ENCODE measurements at regions of chr9 and their contacts with region 1.

Region 1: DNA sequence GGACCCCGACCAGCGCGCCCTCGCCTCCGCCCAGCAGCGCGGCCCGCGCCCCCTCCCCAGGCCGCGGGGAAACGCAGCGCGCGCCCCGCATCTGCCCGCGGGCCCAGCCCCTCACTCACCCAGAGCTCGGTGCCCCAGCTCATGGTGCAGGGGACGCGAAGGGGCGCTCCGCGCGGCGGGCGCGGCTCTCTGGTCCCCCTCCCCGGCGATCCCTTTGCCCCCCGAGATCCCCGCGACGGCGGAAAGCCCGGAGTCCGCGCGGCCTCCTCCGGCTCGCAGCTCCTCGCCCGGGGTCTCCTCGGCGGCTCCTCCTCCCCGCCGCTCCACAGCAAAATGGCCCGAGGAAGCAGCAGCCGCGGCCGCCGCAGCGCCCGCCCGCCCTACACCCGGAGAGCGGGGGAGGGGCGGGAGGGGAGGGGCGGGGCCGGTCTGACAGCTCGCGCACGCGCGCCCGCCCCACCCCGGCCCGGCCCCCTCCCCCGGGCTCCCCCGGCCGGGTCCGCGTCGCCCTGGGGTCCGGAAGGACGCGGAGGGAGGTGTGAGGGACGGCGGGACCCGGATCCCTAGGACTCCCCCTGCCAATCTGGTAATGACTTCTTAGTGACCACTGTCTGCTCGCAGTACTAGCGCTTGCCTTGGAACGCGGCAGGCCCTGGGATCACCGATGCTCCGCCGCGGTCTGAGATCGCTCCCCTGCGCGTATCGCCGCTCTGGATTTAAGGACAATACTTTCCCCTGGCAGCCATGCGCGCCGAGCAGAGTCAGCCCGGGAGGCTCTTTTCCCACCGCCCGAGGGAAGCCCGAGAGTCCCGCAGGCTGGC is at the start of gene FNBP1:
- DNase-seq: peak; percentile 41 to 93 (median 83)

Region 2: DNA sequence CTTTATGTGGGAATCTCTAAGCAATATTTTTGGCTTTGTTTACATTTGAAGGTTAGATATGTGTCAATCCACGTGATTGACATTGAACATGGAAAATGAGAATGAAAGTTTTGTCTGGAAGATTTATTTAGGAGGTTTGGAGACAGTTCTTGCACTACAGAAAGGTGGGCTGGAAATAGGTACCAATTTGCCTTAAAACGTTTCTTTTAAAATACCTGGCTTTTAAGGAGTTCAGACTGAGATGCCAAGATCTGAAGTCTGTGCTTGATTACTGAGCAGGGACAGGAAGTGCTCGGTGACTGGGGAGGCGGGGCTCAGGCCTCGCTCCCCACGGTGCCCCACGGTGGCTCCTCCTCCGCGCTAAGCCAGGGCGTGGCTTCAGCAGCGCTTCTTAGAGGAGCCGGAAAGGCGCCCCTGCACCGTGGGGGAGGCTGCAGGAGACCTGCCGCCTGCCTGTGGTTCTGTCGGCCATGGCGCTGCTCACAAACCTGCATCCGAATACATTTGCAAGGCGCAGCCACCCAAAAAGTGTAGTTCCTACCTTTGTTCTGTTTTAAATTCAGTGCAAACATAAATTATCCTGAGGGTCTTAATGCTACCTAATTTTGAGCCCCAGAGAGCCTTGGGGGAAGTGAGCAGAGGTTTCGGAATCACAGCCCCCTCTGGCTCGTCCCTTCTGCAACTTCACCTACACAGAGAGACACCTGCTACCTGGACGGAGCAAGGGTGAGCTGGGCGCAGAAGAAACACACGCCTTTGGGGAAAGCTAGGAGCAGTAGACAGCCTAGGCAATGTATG is 158.6 kb before region 1 on chr9:
- intact Hi-C with region 1: loop called (anchors 5 kb)
- DNase-seq: peak; percentile 74 to 95 (median 88)

Region 3: DNA sequence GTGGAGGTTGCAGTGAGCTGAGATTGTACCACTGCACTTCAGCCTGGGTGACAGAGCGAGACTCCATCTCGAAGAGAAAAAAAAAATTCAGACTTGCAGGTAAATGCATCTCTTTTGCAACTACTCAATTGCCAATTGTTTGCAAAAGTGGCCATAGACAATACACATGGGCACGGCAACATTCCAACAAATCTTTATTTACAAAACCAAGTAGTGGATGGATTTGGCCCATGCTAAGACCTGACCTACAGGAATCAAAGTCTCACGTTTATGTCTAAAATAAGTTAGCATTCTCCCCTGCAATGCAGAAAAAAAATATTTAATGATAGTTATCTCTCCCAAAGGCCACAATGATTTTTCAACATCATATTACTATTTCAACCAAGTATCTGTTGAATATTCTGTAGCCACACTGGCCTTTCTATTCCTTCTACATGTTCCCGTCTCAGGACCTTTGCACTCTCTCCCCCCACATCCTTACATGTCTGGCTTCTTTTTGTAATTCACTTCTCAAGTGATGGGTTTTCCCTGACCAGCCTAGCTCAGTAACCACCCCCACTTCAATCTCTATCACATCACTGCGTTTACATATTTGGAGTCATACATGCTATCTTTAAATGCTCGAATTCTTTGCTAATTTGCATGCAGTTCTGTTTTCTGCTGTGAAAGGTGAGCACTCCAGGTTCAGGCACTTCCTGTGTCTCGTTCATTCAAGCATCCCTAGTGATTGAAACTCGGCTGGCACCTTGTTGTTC is 54.3 kb before region 1 on chr9:
- intact Hi-C with region 1: no loop called
- DNase-seq: no peak